ENCODE measurements at regions of chr17 and their contacts with region 1.

Region 1: GRCh38 chr17:27654654-27655524 is 23.9 kb downstream of the LGALS9 start:
- DNase-seq: no peak
- H3K4me3 ChIP-seq: no peak overlapping the region
- H3K27me3 ChIP-seq: no peaks in the 10 kb centered on the region
- CTCF ChIP-seq: peak; percentile 82

Region 2: DNA sequence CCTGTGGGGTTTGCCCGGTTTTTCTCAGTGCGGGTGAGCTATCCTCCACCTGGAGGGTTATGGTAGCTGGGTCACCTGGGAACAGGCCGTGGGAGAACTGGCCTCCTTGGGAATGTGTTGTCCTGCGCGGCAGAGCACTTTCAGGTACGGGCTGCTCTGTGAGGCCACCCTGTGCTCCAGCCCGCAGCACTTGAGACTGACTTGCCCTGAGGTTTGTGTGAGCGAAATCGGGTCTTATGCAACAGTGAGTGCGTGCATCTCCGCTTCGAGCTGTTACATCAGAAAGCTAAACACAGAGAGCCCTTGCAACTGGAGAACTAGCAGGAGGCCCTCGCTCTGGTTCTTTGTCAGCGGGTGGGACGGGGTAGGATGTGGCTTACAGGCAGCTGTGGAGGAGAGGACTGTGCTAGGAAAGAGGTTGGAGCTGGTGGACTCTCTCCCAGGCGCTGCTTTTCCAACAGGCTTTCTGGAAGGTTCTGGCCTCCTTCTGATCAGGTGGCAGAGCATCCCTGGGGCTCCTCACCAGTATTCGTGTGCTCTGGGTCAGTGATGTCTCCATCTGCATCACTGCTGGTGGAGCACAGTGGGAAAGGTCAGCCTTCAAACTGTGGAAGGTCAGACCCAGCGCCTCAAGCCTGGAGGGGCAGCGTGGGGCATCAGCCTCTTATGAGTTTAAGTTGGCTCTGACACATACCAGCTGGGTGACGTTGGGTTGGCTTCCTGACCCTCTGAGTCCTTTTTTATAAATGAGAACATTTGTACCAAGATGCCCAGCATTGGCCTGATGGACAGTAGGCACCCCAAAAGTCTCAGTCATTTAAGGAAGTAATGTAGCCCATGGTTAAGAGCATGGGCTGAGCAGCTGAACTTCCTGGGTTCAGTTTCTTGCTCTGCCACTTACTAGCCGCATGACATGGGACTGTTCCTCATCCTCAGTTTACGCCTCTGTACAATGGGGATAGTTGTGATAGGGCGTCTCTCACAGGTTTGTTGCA is 122.3 kb before region 1 on chr17:
- CTCF ChIA-PET with region 1: no interaction called
- POLR2A ChIA-PET with region 1: no interaction called
- DNase-seq: no peak
- H3K4me3 ChIP-seq: no peak overlapping the region
- H3K27me3 ChIP-seq: no peaks in the 10 kb centered on the region
- CTCF ChIP-seq: no peak

Region 3: DNA sequence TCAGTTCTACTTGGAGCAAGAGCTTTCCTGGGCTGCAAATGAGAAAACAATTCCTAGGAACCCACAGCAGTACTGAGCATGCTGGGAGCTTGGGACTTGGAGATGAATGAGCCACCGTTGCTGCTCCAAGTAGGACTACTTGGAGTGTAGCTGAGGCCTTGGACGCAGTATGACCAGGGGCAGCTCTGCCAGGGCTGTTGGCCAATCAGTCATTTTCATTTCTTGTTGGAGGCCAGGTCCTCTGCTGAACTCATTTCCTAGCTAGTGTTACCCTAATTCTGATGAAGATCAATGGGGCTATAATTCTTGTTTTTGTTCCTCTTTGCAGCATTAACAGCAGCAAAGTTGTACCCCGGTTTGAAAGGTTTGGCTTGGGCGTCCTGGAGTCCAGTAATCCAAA is 31.9 kb before region 1 on chr17:
- CTCF ChIA-PET with region 1: interaction called, 415 read pairs
- POLR2A ChIA-PET with region 1: no interaction called
- DNase-seq: no peak
- H3K4me3 ChIP-seq: no peak overlapping the region
- H3K27me3 ChIP-seq: no peaks in the 10 kb centered on the region
- CTCF ChIP-seq: no peak

Region 4: GRCh38 chr17:27631411-27631760 is 23.5 kb before region 1 on chr17:
- CTCF ChIA-PET with region 1: interaction called, 21 read pairs
- POLR2A ChIA-PET with region 1: interaction called, 3 read pairs
- DNase-seq: no peak
- H3K4me3 ChIP-seq: no peak overlapping the region
- H3K27me3 ChIP-seq: no peaks in the 10 kb centered on the region
- CTCF ChIP-seq: no peak

Region 5: GRCh38 chr17:27640790-27641189 is 14.1 kb before region 1 on chr17:
- CTCF ChIA-PET with region 1: interaction called, 26 read pairs
- POLR2A ChIA-PET with region 1: no interaction called
- DNase-seq: no peak
- H3K4me3 ChIP-seq: no peak overlapping the region
- H3K27me3 ChIP-seq: no peaks in the 10 kb centered on the region
- CTCF ChIP-seq: no peak

Region 6: GRCh38 chr17:27760069-27760885 is 105.4 kb after region 1 on chr17:
- CTCF ChIA-PET with region 1: interaction called, 98 read pairs
- POLR2A ChIA-PET with region 1: no interaction called
- DNase-seq: no peak
- H3K4me3 ChIP-seq: no peak overlapping the region
- H3K27me3 ChIP-seq: no peaks in the 10 kb centered on the region; the same call in 1 of the 2 replicates
- CTCF ChIP-seq: peak; percentile 82